OCI-LY7 (cell line): ENCODE measurements at regions of chr3 and their contacts with region 1.

Region 1: GRCh38 chr3:36729204-36730056 is 34.9 kb downstream of the DCLK3 start:
- DNase-seq: peak; percentile 55
- H3K4me3 ChIP-seq: no peak overlapping the region
- H3K27ac ChIP-seq: no peak overlapping the region
- H3K4me1 ChIP-seq: no peaks in the 10 kb centered on the region
- CTCF ChIP-seq: peak; percentile 92

Region 2: DNA sequence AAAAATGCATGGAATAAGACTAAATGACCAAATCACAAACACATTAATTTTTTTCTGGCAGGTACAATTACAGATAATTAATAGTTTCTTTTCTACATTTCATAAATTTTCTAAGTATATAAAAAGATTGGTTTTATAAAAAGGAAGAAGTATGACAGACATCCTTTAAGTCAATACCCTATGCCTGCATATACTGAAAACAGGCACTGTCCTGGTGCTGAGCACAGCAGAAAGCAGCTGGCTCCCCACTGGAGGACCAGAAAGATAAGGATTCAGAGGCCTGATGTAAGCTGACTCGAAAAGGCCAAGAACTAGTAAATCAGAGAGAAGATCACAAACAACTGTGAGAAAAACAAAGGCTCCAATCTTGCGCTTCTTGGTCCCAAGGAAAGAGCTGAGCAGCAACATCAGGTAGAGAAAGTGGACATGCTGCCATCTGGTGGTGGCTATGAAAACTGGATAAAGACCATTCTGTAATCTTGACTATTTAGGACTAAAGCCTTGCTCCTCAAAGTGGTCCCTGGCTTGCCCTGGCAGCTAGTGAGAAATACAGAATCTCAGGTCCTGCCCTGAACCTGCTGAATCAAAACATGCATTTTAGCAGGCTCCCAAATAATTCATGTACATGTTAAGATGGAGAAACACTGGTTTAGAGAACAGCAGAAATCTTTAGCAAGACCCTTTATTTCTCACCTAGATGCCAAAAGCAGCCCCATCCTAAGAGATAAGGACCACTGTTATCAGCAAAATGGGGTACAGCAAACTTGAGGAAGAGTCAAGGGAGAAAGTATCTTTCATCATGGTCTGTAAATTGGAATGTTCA is 139.4 kb after region 1 on chr3:
- CTCF ChIA-PET with region 1: no interaction called
- POLR2A ChIA-PET with region 1: interaction called, 3 read pairs
- intact Hi-C with region 1: loop called (anchors 2 kb)
- DNase-seq: peak; percentile 67
- H3K4me3 ChIP-seq: no peak overlapping the region
- H3K27ac ChIP-seq: no peak overlapping the region
- H3K4me1 ChIP-seq: peaks cover 2% of the 10 kb centered on the region
- CTCF ChIP-seq: peak; percentile 93

Region 3: DNA sequence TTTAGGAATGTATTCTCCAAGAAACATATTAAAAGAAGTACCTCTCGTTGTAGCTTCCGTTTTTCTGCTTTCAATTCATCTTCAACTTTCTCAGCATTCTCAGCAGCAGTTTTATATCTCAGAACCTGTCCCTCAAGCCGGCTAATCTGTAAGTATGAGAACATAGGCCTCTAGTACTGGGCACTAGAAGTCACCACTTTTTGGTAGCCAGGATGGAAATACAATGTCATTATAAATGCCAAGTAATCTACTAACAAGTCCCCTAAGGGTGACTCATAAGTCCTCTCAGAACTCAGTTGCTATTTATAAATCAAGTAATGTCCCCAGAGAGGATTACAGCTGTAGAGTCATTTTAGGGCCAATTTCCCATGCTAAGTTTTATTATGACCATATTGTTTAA is 324.9 kb after region 1 on chr3:
- CTCF ChIA-PET with region 1: no interaction called
- POLR2A ChIA-PET with region 1: no interaction called
- intact Hi-C with region 1: loop called (anchors 10 kb)
- DNase-seq: peak; percentile 22
- H3K4me3 ChIP-seq: no peak overlapping the region
- H3K27ac ChIP-seq: no peak overlapping the region
- H3K4me1 ChIP-seq: peaks cover 12% of the 10 kb centered on the region
- CTCF ChIP-seq: no peak

Region 4: DNA sequence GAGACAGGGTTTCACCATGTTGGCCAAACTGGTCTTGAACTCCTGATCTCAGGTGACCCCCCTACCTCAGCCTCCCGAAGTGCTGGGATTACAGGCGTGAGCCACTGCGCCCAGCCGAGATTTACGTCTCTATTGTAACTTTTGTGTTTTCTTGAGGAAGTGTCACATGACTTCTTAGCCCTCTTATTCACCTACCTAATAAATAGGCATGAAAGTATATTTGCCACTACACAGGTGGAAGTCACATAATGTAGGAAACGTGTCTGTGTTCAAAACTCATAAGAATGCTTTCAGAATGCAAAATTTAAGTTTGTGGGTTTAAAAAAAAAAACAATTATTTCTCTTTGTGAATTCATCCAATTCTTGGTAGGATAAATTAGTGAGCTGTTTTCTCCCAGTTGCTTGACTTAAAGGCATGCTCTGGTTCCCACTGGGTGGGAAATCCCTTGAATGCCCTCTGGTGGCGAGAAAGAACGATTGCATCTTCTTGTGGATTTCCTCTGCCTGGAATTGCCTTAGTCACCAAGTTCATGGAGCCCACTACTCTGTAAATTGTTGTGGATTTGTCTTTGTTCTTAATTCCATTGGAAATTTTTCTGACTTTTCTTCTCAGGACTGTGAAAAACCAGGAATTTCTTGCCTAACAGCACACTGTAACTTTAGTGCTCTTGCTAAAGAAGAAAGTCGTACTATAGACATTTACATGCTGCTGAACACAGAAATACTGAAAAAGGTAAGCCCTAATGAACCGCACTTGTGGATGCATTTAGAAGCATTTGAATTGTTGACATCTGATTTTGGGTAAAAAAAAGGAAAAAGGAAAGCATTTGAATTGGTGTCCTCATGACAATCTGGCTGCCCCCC is 1050.1 kb after region 1 on chr3:
- CTCF ChIA-PET with region 1: no interaction called
- POLR2A ChIA-PET with region 1: no interaction called
- intact Hi-C with region 1: loop called (anchors 5 kb)
- DNase-seq: peak; percentile 72
- H3K4me3 ChIP-seq: no peak overlapping the region
- H3K27ac ChIP-seq: no peak overlapping the region
- H3K4me1 ChIP-seq: no peaks in the 10 kb centered on the region
- CTCF ChIP-seq: peak; percentile 90